Activated CD4-positive, alpha-beta memory T cell treated with anti-CD3 and anti-CD28 coated beads for 36 hours (primary cell): ENCODE measurements at regions of chr3 and their contacts with region 1.

Region 1: GRCh38 chr3:170180908-170181879 is at the start of gene PHC3:
- DNase-seq: peak; percentile 95
- H3K4me3 Mint-ChIP-seq: peak within 1 kb of the TSS; percentile 98
- H3K27ac Mint-ChIP-seq: peak within 1 kb of the TSS; percentile 100
- H3K4me1 Mint-ChIP-seq: peaks cover 21% of the 10 kb centered on the region
- H3K27me3 Mint-ChIP-seq: no peaks in the 10 kb centered on the region
- total RNA-seq, gene PHC3: 37.4 to 38.7 TPM

Region 2: DNA sequence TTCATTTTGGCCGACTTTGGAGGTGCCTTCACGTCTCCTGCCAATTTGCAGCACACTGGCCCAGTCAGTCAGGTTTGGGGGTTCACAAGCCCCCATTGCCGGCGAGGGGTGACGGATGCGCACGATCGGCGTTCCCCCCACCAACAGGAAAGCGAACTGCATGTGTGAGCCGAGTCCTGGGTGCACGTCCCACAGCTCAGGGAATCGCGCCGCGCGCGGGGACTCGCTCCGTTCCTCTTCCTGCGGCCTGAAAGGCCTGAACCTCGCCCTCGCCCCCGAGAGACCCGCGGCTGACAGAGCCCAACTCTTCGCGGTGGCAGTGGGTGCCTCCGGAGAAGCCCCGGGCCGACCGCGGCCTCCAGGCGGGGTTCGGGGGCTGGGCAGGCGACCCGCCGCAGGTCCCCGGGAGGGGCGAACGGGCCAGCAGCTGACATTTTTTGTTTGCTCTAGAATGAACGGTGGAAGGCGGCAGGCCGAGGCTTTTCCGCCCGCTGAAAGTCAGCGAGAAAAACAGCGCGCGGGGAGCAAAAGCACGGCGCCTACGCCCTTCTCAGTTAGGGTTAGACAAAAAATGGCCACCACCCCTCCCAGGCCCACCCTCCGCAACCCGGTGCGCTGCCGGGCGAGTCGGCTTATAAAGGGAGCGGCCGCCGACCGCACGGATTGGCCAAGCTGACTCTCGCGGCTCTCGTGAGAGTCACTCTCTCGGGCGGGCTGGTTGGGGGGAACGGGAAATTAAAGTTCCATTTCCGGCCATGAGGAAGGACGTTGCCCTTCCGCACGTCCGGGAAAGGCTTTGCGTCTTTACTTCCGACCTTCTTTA is 416.5 kb before region 1 on chr3 and contains the start of gene TERC:
- CTCF ChIA-PET with region 1: interaction called, 3 read pairs
- POLR2A ChIA-PET with region 1: no interaction called
- intact Hi-C with region 1: loop called (anchors 2 kb)
- DNase-seq: peak; percentile 95
- H3K4me3 Mint-ChIP-seq: peak within 1 kb of the TSS; percentile 96
- H3K27ac Mint-ChIP-seq: peak within 1 kb of the TSS; percentile 99
- H3K4me1 Mint-ChIP-seq: peaks cover 22% of the 10 kb centered on the region
- H3K27me3 Mint-ChIP-seq: no peaks in the 10 kb centered on the region
- total RNA-seq, gene TERC: 11.5 to 19.2 TPM

Region 3: GRCh38 chr3:169863458-169863899 is 317.7 kb before region 1 on chr3:
- CTCF ChIA-PET with region 1: no interaction called
- POLR2A ChIA-PET with region 1: no interaction called
- intact Hi-C with region 1: loop called (anchors 10 kb)
- DNase-seq: peak; percentile 79
- H3K4me3 Mint-ChIP-seq: no peak overlapping the region
- H3K27ac Mint-ChIP-seq: no peak overlapping the region
- H3K4me1 Mint-ChIP-seq: peaks cover 8% of the 10 kb centered on the region
- H3K27me3 Mint-ChIP-seq: peaks cover 10% of the 10 kb centered on the region

Region 4: GRCh38 chr3:170162630-170163029 is 18.6 kb before region 1 on chr3:
- CTCF ChIA-PET with region 1: interaction called, 3 read pairs
- POLR2A ChIA-PET with region 1: interaction called, 8 read pairs
- intact Hi-C with region 1: loop called (anchors 2 kb)
- DNase-seq: no peak
- H3K4me3 Mint-ChIP-seq: no peak overlapping the region
- H3K27ac Mint-ChIP-seq: peak overlapping the region; percentile 60
- H3K4me1 Mint-ChIP-seq: peaks cover 63% of the 10 kb centered on the region
- H3K27me3 Mint-ChIP-seq: no peaks in the 10 kb centered on the region

Region 5: DNA sequence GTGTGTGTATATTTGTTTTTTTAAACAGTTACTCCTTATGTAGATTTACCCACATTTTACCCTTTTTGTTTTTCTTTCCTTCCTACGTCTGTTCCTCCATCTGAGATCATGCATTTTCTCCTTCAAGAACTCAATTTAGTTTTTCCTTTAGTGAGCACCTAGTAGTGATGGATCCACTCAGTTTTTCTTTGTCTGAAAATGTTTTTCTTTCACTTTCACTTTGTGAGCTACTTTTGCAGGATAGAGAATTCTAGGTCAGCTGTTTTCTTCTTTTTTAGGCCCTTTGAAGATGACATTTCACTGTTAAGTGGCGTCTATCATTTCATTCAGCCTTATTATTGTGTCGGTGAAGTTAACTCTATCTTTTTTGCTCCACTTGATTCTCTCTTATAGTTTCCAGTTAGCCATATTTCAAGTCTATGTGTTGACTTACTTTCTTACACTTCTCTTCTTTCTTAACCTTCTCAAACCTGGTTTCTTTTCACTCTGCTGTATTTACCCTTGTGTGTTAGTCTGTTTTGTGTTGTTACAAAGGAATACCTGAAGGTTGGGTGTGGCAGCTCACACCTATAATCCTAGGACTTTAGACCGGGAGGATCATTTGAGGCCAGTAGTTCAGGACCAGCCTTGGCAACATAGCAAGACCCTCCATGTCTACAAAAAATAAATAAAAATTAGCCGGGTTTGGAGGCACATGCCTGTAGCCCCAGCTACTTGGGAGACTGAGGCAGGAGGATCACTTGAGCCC is 96.8 kb after region 1 on chr3:
- CTCF ChIA-PET with region 1: no interaction called
- POLR2A ChIA-PET with region 1: no interaction called
- intact Hi-C with region 1: loop called (anchors 10 kb)
- DNase-seq: no peak
- H3K4me3 Mint-ChIP-seq: peak overlapping the region; percentile 62
- H3K27ac Mint-ChIP-seq: peak overlapping the region; percentile 53
- H3K4me1 Mint-ChIP-seq: peaks cover 24% of the 10 kb centered on the region
- H3K27me3 Mint-ChIP-seq: no peaks in the 10 kb centered on the region

Region 6: DNA sequence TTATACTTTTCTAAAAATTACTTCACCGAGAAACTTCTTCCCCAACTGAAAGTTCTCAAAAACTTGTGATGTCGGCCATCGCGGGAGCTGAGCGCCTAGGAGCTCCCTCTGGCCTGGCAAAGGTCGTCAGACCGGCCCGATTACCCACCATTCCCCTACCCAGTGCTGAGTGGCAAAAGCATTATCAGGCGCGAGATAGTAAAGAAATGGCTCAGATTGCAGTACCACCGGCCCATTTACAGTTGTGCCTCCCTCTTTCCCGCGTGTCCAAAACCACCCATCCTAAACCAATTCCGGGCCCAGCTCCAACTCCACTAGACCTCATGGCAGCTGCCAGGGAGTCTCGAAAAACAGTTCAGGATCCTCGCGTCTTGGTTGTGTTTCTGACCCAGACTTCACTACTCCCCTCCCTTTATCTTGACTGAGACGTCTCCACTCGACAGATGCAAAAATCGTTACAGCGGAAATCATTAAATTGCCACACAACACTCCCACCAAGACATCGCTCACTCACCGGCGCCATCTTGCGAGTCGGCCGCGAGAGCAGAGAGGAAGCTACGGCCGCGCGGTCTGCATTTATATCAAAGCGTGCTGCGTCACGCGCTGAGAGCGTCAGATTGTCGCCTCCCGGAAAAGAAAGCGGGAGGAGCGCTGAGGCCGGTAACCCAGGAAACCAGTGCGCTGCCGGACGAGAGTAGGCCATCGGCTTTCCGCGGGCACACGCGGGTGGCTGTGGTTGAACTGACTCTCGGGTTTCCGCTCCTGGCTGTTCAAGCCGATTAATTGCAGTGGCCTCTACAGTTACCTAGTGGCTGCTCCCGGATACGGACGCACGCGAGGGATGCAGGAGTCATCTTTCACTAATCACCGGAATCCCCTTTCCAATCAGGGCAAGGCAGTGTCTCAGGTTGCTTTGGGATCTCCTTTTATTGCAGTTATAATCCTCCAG is 688.7 kb after region 1 on chr3 and contains the start of gene RPL22L1:
- CTCF ChIA-PET with region 1: no interaction called
- POLR2A ChIA-PET with region 1: interaction called, 3 read pairs
- intact Hi-C with region 1: loop called (anchors 10 kb)
- DNase-seq: peak; percentile 95
- H3K4me3 Mint-ChIP-seq: peak within 1 kb of the TSS; percentile 97
- H3K27ac Mint-ChIP-seq: peak within 1 kb of the TSS; percentile 98
- H3K4me1 Mint-ChIP-seq: peaks cover 22% of the 10 kb centered on the region
- H3K27me3 Mint-ChIP-seq: no peaks in the 10 kb centered on the region
- total RNA-seq, gene RPL22L1: 379 to 382 TPM